MCF 10A (cell line): ENCODE measurements at regions of chr11 and their contacts with region 1.

Region 1: DNA sequence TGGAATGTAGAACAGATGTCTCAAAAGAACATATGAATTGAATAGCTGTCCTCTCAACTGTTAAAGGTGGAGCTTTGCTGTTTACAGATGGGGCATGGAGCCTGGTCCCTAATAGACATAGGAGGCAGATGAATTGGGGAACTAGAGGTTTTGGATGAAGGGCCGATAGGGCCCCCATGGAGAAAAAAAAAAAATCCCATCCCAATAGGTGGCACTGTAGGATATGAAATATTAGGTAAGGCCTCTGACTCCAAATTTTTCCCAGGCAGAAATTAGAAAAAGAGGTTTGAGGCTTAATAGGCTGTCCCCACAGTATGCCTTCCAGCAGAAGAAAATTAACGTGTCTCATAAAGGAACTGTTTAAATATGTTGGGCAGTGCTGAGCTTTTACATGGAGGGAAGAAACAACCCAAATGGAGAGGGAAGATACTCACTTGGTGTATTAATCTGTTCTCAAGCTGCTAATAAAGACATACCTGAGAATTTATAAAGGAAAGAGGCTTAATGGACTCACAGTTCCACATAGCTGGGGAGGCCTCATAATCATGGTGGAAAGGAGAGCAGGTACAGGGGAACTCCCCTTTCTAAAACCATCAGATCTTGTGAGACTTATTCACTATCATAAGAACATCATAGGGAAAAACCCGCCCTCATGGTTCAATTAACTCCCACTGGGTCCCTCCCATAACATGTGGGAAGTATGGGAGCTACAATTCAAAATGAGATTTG is 30.1 kb upstream of the TMEM45B start:
- DNase-seq: peak; percentile 55
- H3K4me3 Mint-ChIP-seq: no peak overlapping the region
- H3K27ac Mint-ChIP-seq: no peak overlapping the region
- H3K4me1 Mint-ChIP-seq: peaks cover 8% of the 10 kb centered on the region
- H3K27me3 Mint-ChIP-seq: no peaks in the 10 kb centered on the region
- CTCF ChIP-seq: peak; percentile 62

Region 2: GRCh38 chr11:129703846-129704245 is 81.7 kb before region 1 on chr11:
- CTCF ChIA-PET with region 1: no interaction called
- POLR2A ChIA-PET with region 1: no interaction called
- intact Hi-C with region 1: no loop called
- DNase-seq: peak; percentile 80
- H3K4me3 Mint-ChIP-seq: peak overlapping the region; percentile 29
- H3K27ac Mint-ChIP-seq: peak overlapping the region; percentile 66
- H3K4me1 Mint-ChIP-seq: peaks cover 26% of the 10 kb centered on the region
- H3K27me3 Mint-ChIP-seq: peaks cover 16% of the 10 kb centered on the region
- CTCF ChIP-seq: no peak

Region 3: DNA sequence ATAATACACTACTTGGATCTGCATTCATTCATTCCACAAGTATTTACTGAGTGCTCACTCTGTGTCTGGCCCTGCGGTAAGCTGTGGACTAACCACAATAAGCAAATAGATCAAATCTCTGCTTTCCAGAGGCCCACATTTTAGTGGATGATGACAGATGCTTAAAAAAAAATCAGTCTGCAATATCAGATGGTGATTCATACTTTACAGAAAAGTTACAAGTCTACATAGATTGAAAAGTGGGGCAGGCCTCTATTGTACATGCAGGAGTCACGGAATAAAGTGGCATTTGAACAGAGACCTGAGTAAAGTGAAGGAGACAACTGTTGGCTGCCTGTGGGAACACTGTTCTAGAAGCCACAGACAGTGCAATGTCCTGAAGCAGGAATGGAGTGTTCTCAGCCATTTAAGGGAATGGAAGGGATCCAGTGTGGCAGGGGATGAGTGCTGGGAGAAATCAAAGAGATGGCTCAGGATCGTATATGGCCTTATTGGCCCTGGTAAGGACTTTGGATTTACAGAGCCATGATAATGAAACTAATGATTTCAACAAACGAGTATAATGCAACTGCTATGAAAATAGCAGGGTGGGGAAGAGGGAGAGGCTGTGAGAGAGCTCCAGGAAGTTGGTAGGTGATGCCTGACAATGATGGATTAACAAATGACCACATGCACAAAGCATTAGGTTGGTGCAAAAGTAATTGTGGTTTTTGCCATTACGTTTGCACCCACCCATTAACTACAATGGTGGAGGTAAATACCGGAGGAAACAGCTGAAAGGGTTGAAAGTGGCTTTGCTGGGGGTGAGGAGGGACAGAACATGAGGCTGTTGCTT is 61.2 kb after region 1 on chr11:
- CTCF ChIA-PET with region 1: interaction called, 13 read pairs
- POLR2A ChIA-PET with region 1: interaction called, 31 read pairs
- intact Hi-C with region 1: loop called (anchors 5 kb)
- DNase-seq: peak; percentile 80
- H3K4me3 Mint-ChIP-seq: peak overlapping the region; percentile 56
- H3K27ac Mint-ChIP-seq: peak overlapping the region; percentile 88
- H3K4me1 Mint-ChIP-seq: peaks cover 12% of the 10 kb centered on the region
- H3K27me3 Mint-ChIP-seq: no peaks in the 10 kb centered on the region
- CTCF ChIP-seq: no peak

Region 4: GRCh38 chr11:129888451-129888850 is 102.9 kb after region 1 on chr11:
- CTCF ChIA-PET with region 1: interaction called, 17 read pairs
- POLR2A ChIA-PET with region 1: no interaction called
- intact Hi-C with region 1: no loop called
- DNase-seq: no peak
- H3K4me3 Mint-ChIP-seq: no peak overlapping the region
- H3K27ac Mint-ChIP-seq: no peak overlapping the region
- H3K4me1 Mint-ChIP-seq: no peaks in the 10 kb centered on the region
- H3K27me3 Mint-ChIP-seq: no peaks in the 10 kb centered on the region
- CTCF ChIP-seq: no peak

Region 5: DNA sequence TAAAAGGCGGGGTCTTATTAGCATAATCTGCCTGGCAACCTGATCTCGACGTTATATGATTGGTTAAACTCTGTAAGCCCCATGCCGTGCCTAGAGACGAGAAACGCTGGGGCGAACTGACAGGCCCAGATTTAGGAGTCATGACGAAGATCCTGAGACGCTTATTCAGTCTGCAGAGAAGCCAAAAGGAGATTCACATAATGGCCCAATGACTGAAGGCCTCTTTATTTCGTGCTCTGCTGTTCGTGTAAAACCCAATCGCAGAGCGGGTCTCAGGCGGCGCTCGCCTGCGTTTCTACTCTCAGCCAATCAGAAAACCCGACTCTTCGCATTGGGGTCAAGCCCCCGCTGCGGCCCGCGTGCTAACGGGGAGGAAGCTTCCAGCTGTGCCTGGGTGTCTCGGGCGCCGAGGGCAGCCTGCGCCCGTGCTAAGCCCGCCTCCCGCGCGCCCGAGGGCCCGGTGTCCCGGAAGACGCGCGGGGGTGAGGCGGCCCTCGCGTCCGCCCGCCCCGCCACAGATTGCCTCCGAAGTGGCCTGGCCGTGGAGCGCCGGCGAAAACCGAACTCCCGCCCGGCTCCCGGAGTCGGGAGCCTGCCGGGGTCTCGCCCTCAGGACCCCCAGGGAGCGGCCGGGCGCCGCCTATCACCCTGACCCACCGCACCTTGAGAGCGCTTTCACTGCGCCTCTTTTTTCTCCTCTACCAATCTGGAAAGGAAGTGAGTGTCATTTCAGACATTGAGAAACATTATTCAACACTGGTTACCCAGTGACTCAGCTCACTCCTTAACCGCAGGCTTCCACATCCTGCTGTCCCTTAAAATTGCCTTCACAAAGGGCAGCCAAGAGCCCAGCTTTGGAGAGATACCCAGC is 217.5 kb after region 1 on chr11:
- CTCF ChIA-PET with region 1: no interaction called
- POLR2A ChIA-PET with region 1: no interaction called
- intact Hi-C with region 1: loop called (anchors 5 kb)
- DNase-seq: peak; percentile 97
- H3K4me3 Mint-ChIP-seq: peak overlapping the region; percentile 97
- H3K27ac Mint-ChIP-seq: peak overlapping the region; percentile 100
- H3K4me1 Mint-ChIP-seq: peaks cover 12% of the 10 kb centered on the region
- H3K27me3 Mint-ChIP-seq: no peaks in the 10 kb centered on the region
- CTCF ChIP-seq: no peak

Region 6: DNA sequence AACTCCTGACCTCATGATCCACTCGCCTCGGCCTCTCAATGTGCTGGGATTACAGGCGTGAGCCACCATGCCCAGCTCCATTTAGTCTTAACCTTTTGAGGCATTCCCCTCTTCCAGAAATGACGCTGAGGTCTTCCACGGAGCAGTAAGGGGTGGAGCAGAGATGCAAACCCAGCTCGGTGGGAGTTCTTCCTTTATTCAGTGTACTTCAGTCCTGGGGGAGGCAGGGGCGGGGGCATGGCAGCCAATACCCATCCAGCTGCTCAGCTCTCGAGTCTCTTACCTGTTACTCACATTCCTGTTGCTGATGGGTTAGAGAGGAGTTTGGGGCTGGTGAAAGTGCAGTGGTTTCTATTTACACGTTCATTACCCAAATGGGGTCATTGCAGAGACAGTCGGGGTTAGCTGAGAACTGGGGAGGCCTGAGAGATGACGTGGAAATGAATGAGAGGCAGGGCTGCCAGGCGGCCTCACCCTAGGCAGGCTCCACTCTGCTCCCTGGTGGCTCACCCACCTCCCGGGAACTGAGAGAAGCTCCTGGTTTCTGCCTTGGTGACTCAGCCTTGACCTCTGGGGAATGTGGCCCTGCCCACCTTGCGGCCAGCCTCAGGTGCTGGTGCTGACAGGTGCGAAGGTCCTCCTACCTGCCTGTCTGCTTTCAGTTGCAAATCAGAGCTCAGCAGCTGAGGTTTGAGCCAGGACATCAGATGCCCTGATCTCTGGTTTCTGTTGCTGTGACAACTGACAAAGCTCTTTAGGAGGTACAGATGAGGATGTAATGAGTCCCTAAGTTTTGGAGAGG is 360.6 kb after region 1 on chr11:
- CTCF ChIA-PET with region 1: interaction called, 10 read pairs
- POLR2A ChIA-PET with region 1: no interaction called
- intact Hi-C with region 1: no loop called
- DNase-seq: peak; percentile 91
- H3K4me3 Mint-ChIP-seq: no peak overlapping the region
- H3K27ac Mint-ChIP-seq: peak overlapping the region; percentile 65
- H3K4me1 Mint-ChIP-seq: peaks cover 9% of the 10 kb centered on the region
- H3K27me3 Mint-ChIP-seq: no peaks in the 10 kb centered on the region
- CTCF ChIP-seq: peak; percentile 32